B cell (primary cell): ENCODE measurements at regions of chr1 and their contacts with region 1.

Region 1: DNA sequence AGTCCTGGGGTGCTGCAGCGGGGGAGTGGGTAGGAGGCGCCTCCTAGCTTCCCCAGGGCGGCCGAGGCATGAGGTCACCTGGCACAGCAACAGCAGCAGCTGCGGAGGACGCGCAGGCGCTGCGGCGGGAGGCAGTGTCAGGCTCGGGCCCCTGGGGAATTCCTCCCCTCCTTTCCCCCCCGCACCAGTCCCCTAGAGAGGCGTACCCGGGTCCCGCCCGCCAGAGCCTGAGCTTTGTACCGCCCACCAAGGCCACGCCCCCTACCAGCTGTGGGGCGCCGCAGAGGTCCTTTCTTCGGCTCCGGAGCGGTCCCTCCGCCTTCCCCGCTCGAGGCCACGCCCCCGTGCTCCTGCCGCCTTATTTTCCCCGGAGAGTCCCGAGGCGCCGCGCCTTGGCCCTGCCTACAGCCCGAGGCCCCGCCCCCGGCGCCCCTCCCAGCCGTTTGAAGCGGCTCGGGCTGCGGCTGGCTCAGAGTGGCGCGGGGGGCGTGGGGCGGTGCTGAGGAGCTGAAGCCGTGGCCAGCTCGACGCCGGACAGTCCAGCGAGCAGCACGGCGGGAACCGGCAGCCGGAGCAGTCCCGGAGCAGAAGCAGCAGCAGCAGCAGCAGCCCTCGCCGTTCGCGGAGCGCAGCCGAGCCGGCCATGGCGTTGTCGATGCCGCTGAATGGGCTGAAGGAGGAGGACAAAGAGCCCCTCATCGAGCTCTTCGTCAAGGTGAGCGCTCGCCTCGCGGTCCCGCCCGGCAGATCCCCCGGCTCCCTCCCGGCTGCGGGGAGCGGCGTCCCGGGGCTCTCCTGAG is at the start of gene CLIC4:
- DNase-seq: peak; percentile 100
- ATAC-seq: peak; percentile 78
- H3K4me3 ChIP-seq: peak within 1 kb of the TSS; percentile 79 to 99 (median 91)
- H3K4me3 Mint-ChIP-seq: peak within 1 kb of the TSS; percentile 94
- H3K27ac ChIP-seq: peak within 1 kb of the TSS; percentile 72 to 88
- H3K27ac Mint-ChIP-seq: peak within 1 kb of the TSS; percentile 99
- H3K4me1 ChIP-seq: peaks cover 63 to 82% of the 10 kb centered on the region in 2 donors
- H3K4me1 Mint-ChIP-seq: peaks cover 67% of the 10 kb centered on the region
- H3K27me3 ChIP-seq: no peaks in the 10 kb centered on the region
- H3K27me3 Mint-ChIP-seq: no peaks in the 10 kb centered on the region
- CTCF ChIP-seq: no peak
- total RNA-seq, gene CLIC4: 123 and 127 TPM in 2 replicates

Region 2: GRCh38 chr1:24536391-24536840 is 208.7 kb before region 1 on chr1:
- CTCF ChIA-PET with region 1: no interaction called
- POLR2A ChIA-PET with region 1: no interaction called
- intact Hi-C with region 1: loop called (anchors 5 kb)
- DNase-seq: peak; percentile 85
- ATAC-seq: peak; percentile 76
- H3K4me3 ChIP-seq: peak overlapping the region in 3 of 5 experiments; percentile 19 to 45 (median 20)
- H3K4me3 Mint-ChIP-seq: peak overlapping the region; percentile 83
- H3K27ac ChIP-seq: peak overlapping the region; percentile 74 to 97
- H3K27ac Mint-ChIP-seq: peak overlapping the region; percentile 98
- H3K4me1 ChIP-seq: peaks cover 54 to 60% of the 10 kb centered on the region in 2 donors
- H3K4me1 Mint-ChIP-seq: peaks cover 68% of the 10 kb centered on the region
- H3K27me3 ChIP-seq: no peaks in the 10 kb centered on the region
- H3K27me3 Mint-ChIP-seq: no peaks in the 10 kb centered on the region
- CTCF ChIP-seq: no peak

Region 3: GRCh38 chr1:24694380-24694843 is 50.7 kb before region 1 on chr1:
- CTCF ChIA-PET with region 1: interaction called, 49 read pairs
- POLR2A ChIA-PET with region 1: interaction called, 11 read pairs
- intact Hi-C with region 1: loop called (anchors 2 kb)
- DNase-seq: peak; percentile 32
- ATAC-seq: no peak
- H3K4me3 ChIP-seq: peak overlapping the region in 1 of 5 experiments; percentile 14
- H3K4me3 Mint-ChIP-seq: peak overlapping the region; percentile 70
- H3K27ac ChIP-seq: peak overlapping the region; percentile 60 to 71
- H3K27ac Mint-ChIP-seq: peak overlapping the region; percentile 71
- H3K4me1 ChIP-seq: peaks cover 30 to 32% of the 10 kb centered on the region in 2 donors
- H3K4me1 Mint-ChIP-seq: peaks cover 34% of the 10 kb centered on the region
- H3K27me3 ChIP-seq: no peaks in the 10 kb centered on the region
- H3K27me3 Mint-ChIP-seq: no peaks in the 10 kb centered on the region
- CTCF ChIP-seq: no peak

Region 4: GRCh38 chr1:24707687-24708086 is 37.4 kb before region 1 on chr1:
- CTCF ChIA-PET with region 1: interaction called, 4 read pairs
- POLR2A ChIA-PET with region 1: interaction called, 3 read pairs
- intact Hi-C with region 1: loop called (anchors 2 kb)
- DNase-seq: no peak
- ATAC-seq: no peak
- H3K4me3 ChIP-seq: no peak overlapping the region
- H3K4me3 Mint-ChIP-seq: no peak overlapping the region
- H3K27ac ChIP-seq: no peak overlapping the region
- H3K27ac Mint-ChIP-seq: no peak overlapping the region
- H3K4me1 ChIP-seq: peaks cover 11% of the 10 kb centered on the region in 2 donors
- H3K4me1 Mint-ChIP-seq: peaks cover 10% of the 10 kb centered on the region
- H3K27me3 ChIP-seq: no peaks in the 10 kb centered on the region
- H3K27me3 Mint-ChIP-seq: no peaks in the 10 kb centered on the region
- CTCF ChIP-seq: no peak

Region 5: DNA sequence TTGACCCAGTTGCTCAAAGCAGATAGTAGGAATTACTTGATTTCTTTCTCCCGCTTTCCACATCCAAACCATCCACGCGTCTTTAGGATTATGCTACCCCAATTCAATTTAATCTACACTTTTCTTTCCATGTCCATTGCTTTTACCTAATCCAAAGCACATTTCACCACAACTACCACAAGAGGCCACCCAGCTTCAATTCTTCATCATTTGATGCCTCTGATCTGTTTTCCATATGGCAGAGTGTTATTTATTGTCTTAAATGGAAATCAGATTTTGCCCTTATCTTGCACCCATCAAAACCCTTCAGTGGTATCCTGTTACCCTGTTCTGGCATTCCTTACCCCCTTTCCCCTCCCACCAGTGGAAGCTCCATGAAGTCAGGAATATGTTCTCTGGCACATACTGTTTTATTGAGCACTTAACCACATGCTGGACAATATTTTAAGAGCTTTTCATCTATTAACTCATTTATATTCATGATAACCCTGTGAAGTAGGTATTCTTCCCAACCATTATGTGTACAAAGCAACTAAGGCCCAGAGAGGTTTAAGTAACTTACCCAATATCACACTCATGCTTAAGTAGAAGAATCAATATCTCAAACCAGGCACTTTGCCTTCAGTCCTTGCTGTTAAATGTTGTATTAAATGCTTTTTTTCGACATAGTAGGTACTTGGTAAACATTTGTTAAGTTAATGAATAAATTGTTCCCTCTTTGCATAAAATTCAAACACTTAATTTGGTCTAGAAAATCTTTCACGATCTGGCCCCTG is 34.8 kb after region 1 on chr1:
- CTCF ChIA-PET with region 1: no interaction called
- POLR2A ChIA-PET with region 1: interaction called, 6 read pairs
- intact Hi-C with region 1: loop called (anchors 5 kb)
- DNase-seq: no peak
- ATAC-seq: no peak
- H3K4me3 ChIP-seq: no peak overlapping the region
- H3K4me3 Mint-ChIP-seq: no peak overlapping the region
- H3K27ac ChIP-seq: no peak overlapping the region
- H3K27ac Mint-ChIP-seq: no peak overlapping the region
- H3K4me1 ChIP-seq: peaks cover 17 to 18% of the 10 kb centered on the region in 2 donors
- H3K4me1 Mint-ChIP-seq: peaks cover 60% of the 10 kb centered on the region
- H3K27me3 ChIP-seq: no peaks in the 10 kb centered on the region
- H3K27me3 Mint-ChIP-seq: no peaks in the 10 kb centered on the region
- CTCF ChIP-seq: no peak

Region 6: DNA sequence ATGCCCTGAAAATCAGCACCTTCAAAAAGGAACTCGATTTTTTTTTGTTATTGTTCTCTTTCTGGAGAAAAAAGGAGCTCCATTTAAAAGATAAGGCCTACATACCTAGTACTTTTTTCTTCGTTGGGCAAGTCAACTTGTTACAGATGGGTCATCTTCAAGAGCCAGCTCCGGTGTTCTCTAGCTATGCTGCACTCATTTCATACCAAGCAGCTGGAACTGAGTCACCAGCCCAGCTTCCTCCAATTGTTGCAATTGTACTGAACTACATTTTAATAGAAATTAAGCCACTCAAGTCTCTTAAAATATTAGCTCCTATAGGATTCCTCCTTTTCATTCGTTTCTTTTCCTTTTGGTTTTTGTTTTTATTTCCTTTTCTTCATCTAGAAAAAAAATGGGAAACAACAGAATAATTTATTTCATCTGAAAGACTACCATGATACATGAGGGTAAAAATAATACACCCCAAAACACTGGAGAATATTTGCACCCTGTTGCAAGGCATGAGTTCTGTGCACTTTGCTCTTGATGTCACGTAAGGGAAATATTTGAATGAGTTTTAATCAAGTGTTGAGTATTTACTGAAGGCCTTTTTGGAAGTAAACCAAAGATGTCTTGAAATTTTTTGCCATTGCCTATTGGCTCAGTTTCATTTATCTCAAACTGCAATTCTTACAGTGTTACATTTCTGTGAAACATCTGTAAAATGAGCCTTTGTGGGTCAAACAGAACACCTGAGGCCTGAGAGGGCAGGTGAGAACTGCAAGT is 60.6 kb after region 1 on chr1:
- CTCF ChIA-PET with region 1: no interaction called
- POLR2A ChIA-PET with region 1: interaction called, 3 read pairs
- intact Hi-C with region 1: loop called (anchors 5 kb)
- DNase-seq: no peak
- ATAC-seq: no peak
- H3K4me3 ChIP-seq: no peak overlapping the region
- H3K4me3 Mint-ChIP-seq: no peak overlapping the region
- H3K27ac ChIP-seq: peak overlapping the region in 1 of 2 donors; percentile 24
- H3K27ac Mint-ChIP-seq: no peak overlapping the region
- H3K4me1 ChIP-seq: peaks cover 15 to 27% of the 10 kb centered on the region in 2 donors
- H3K4me1 Mint-ChIP-seq: peaks cover 43% of the 10 kb centered on the region
- H3K27me3 ChIP-seq: no peaks in the 10 kb centered on the region
- H3K27me3 Mint-ChIP-seq: no peaks in the 10 kb centered on the region
- CTCF ChIP-seq: no peak